ENCODE measurements at regions of chr5 and their contacts with region 1.

Region 1: DNA sequence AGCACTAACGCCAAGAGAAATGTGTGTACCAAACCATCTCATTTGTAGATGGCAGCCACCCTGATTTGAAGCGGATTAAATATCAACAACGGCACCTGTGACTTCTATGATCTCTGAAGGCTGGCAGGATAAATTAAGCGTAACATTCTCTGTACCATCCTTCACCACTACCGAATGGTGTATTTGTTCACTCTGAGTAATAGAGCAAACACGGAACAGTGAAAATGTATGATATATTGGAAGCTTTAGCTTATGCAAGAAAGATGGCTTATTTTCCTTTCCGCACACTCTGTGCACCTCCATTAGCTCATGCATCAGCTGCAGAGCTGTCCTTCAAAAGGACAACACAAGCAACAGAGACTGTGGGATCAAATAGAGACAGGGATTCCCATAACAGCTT is 431.1 kb downstream of the PRELID2 start:
- DNase-seq: no peak
- ATAC-seq: no peak
- H3K4me3 ChIP-seq: no peak overlapping the region
- H3K4me3 Mint-ChIP-seq: no peak overlapping the region
- H3K27ac ChIP-seq: no peak overlapping the region
- H3K27ac Mint-ChIP-seq: no peak overlapping the region
- H3K4me1 ChIP-seq: no peaks in the 10 kb centered on the region
- H3K4me1 Mint-ChIP-seq: no peaks in the 10 kb centered on the region
- H3K27me3 ChIP-seq: no peaks in the 10 kb centered on the region
- H3K27me3 Mint-ChIP-seq: no peaks in the 10 kb centered on the region
- CTCF ChIP-seq: no peak

Region 2: GRCh38 chr5:145378226-145378625 is 25.8 kb before region 1 on chr5:
- CTCF ChIA-PET with region 1: no interaction called
- POLR2A ChIA-PET with region 1: no interaction called
- intact Hi-C with region 1: loop called in 1 of 2 experiments (anchors 1 kb)
- DNase-seq: no peak
- ATAC-seq: no peak
- H3K4me3 ChIP-seq: no peak overlapping the region
- H3K4me3 Mint-ChIP-seq: no peak overlapping the region
- H3K27ac ChIP-seq: no peak overlapping the region
- H3K27ac Mint-ChIP-seq: no peak overlapping the region
- H3K4me1 ChIP-seq: no peaks in the 10 kb centered on the region
- H3K4me1 Mint-ChIP-seq: no peaks in the 10 kb centered on the region
- H3K27me3 ChIP-seq: no peaks in the 10 kb centered on the region
- H3K27me3 Mint-ChIP-seq: no peaks in the 10 kb centered on the region
- CTCF ChIP-seq: no peak

Region 3: DNA sequence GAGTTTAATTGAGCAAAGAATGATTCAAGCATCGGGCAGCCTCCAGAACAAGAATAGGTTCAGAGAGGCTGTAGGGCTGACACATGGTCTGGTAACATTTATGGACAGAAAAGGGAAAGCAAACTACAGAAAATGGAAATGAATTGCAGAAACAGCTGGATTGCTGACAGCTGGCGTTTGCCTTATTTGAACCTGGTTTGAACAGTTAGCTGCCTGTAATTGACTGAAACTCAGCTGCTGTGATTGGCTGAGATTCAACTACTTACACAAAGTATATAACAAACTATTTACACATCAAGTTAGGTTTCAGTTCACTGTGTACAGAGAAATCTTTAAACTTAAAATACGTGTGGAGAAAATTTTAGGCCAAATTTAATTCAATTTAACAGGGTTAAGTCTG is 10.6 kb before region 1 on chr5:
- CTCF ChIA-PET with region 1: no interaction called
- POLR2A ChIA-PET with region 1: no interaction called
- intact Hi-C with region 1: no loop called
- DNase-seq: no peak
- ATAC-seq: no peak
- H3K4me3 ChIP-seq: no peak overlapping the region
- H3K4me3 Mint-ChIP-seq: no peak overlapping the region
- H3K27ac ChIP-seq: no peak overlapping the region
- H3K27ac Mint-ChIP-seq: no peak overlapping the region
- H3K4me1 ChIP-seq: no peaks in the 10 kb centered on the region
- H3K4me1 Mint-ChIP-seq: no peaks in the 10 kb centered on the region
- H3K27me3 ChIP-seq: no peaks in the 10 kb centered on the region
- H3K27me3 Mint-ChIP-seq: no peaks in the 10 kb centered on the region
- CTCF ChIP-seq: no peak